AG04450 (cell line): ENCODE measurements at regions of chr1 and their contacts with region 1.

Region 1: DNA sequence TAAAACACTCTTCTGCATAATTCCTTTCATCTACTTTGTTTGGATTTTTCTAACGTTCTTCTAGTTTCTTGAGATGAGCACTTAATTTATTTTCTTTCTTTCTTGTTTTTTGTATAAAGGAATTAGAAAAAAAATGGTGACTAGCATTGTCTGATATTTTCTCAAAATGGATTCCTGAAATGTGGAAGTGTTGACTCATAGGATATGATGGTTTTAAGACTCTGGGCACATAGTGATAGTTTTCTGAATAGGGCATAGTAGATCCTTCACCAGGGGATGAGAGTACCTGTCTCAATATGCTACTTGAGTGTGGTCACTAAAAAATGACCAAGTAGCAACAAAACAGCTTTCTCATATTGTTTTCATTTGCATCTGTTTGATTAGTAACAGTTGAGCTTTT is 100.9 kb downstream of the PEX14 start:
- DNase-seq: peak; percentile 26
- H3K4me3 ChIP-seq: no peak overlapping the region
- H3K27ac ChIP-seq: no peak overlapping the region
- H3K27me3 ChIP-seq: no peaks in the 10 kb centered on the region
- CTCF ChIP-seq: no peak

Region 2: GRCh38 chr1:10628685-10629084 is 53.1 kb after region 1 on chr1:
- CTCF ChIA-PET with region 1: interaction called, 10 read pairs
- POLR2A ChIA-PET with region 1: no interaction called
- DNase-seq: no peak
- H3K4me3 ChIP-seq: no peak overlapping the region
- H3K27ac ChIP-seq: no peak overlapping the region
- H3K27me3 ChIP-seq: no peaks in the 10 kb centered on the region
- CTCF ChIP-seq: no peak